A549 (cell line): ENCODE measurements at regions of chr10 and their contacts with region 1.

Region 1: GRCh38 chr10:97553575-97554031 is 19.0 kb upstream of the ANKRD2 start:
- DNase-seq: peak; percentile 74 to 76
- ATAC-seq: peak; percentile 98 to 100
- H3K4me3 ChIP-seq: no peak overlapping the region
- H3K27ac ChIP-seq: peak overlapping the region in 1 of 2 experiments; percentile 66; a peak in 3 of 6 replicates
- H3K4me1 ChIP-seq: peaks cover 8% of the 10 kb centered on the region
- CTCF ChIP-seq: peak; percentile 86
- EP300 ChIP-seq: no peak
- POLR2A ChIP-seq: no peak
- RAD21 ChIP-seq: peak; percentile 89 to 91

Region 2: GRCh38 chr10:97425964-97426775 is 127.4 kb before region 1 on chr10 and contains the start of gene PGAM1:
- CTCF ChIA-PET with region 1: no interaction called
- POLR2A ChIA-PET with region 1: no interaction called
- DNase-seq: peak; percentile 96 to 97
- ATAC-seq: peak; percentile 92 to 94
- H3K4me3 ChIP-seq: peak within 1 kb of the TSS; percentile 73
- H3K27ac ChIP-seq: peak within 1 kb of the TSS; percentile 88 to 91
- H3K4me1 ChIP-seq: peaks cover 17% of the 10 kb centered on the region; the same call in 2 of the 3 replicates
- CTCF ChIP-seq: peak; percentile 62
- EP300 ChIP-seq: no peak
- POLR2A ChIP-seq: peak; percentile 48
- RAD21 ChIP-seq: no peak
- polyA plus RNA-seq, gene PGAM1: 459 and 516 TPM in 2 replicates

Region 3: GRCh38 chr10:97463363-97464132 is 90.1 kb before region 1 on chr10:
- CTCF ChIA-PET with region 1: interaction called, 218 read pairs
- POLR2A ChIA-PET with region 1: interaction called, 3 read pairs
- DNase-seq: peak; percentile 62 to 63
- ATAC-seq: peak; percentile 67 to 75; a peak in 5 of 6 replicates
- H3K4me3 ChIP-seq: no peak overlapping the region
- H3K27ac ChIP-seq: peak overlapping the region in 1 of 2 experiments; percentile 10; a peak in 1 of 6 replicates
- H3K4me1 ChIP-seq: peaks cover 8% of the 10 kb centered on the region
- CTCF ChIP-seq: peak; percentile 95
- EP300 ChIP-seq: no peak
- POLR2A ChIP-seq: no peak
- RAD21 ChIP-seq: peak; percentile 83 to 84

Region 4: GRCh38 chr10:97498076-97498840 is 55.3 kb before region 1 on chr10 and contains the start of gene MMS19:
- CTCF ChIA-PET with region 1: interaction called, 38 read pairs
- POLR2A ChIA-PET with region 1: interaction called, 5 read pairs
- DNase-seq: peak; percentile 97 to 98
- ATAC-seq: peak; percentile 73 to 82
- H3K4me3 ChIP-seq: peak within 1 kb of the TSS; percentile 74
- H3K27ac ChIP-seq: peak within 1 kb of the TSS; percentile 85 to 96
- H3K4me1 ChIP-seq: peaks cover 23% of the 10 kb centered on the region; the same call in 2 of the 3 replicates
- CTCF ChIP-seq: no peak
- EP300 ChIP-seq: no peak
- POLR2A ChIP-seq: peak; percentile 73
- RAD21 ChIP-seq: no peak
- polyA plus RNA-seq, gene MMS19: 65.6 and 83.4 TPM in 2 replicates

Region 5: GRCh38 chr10:97534746-97535367 is 18.7 kb before region 1 on chr10:
- CTCF ChIA-PET with region 1: interaction called, 213 read pairs
- POLR2A ChIA-PET with region 1: interaction called, 3 read pairs
- DNase-seq: peak; percentile 61 to 67
- ATAC-seq: peak; percentile 77 to 87
- H3K4me3 ChIP-seq: no peak overlapping the region
- H3K27ac ChIP-seq: 0 out of 6 replicates have a peak overlapping the region, but pooled peaks of 1 of the 2 experiments have one; percentile 16
- H3K4me1 ChIP-seq: peaks cover 20% of the 10 kb centered on the region
- CTCF ChIP-seq: peak; percentile 59
- EP300 ChIP-seq: no peak
- POLR2A ChIP-seq: no peak
- RAD21 ChIP-seq: peak; percentile 52 to 74

Region 6: GRCh38 chr10:97566339-97566996 is 12.9 kb after region 1 on chr10:
- CTCF ChIA-PET with region 1: interaction called, 131 read pairs
- POLR2A ChIA-PET with region 1: no interaction called
- DNase-seq: no peak
- ATAC-seq: no peak
- H3K4me3 ChIP-seq: no peak overlapping the region
- H3K27ac ChIP-seq: no peak overlapping the region
- H3K4me1 ChIP-seq: peaks cover 7% of the 10 kb centered on the region
- CTCF ChIP-seq: no peak
- EP300 ChIP-seq: no peak
- POLR2A ChIP-seq: no peak
- RAD21 ChIP-seq: no peak

Region 7: DNA sequence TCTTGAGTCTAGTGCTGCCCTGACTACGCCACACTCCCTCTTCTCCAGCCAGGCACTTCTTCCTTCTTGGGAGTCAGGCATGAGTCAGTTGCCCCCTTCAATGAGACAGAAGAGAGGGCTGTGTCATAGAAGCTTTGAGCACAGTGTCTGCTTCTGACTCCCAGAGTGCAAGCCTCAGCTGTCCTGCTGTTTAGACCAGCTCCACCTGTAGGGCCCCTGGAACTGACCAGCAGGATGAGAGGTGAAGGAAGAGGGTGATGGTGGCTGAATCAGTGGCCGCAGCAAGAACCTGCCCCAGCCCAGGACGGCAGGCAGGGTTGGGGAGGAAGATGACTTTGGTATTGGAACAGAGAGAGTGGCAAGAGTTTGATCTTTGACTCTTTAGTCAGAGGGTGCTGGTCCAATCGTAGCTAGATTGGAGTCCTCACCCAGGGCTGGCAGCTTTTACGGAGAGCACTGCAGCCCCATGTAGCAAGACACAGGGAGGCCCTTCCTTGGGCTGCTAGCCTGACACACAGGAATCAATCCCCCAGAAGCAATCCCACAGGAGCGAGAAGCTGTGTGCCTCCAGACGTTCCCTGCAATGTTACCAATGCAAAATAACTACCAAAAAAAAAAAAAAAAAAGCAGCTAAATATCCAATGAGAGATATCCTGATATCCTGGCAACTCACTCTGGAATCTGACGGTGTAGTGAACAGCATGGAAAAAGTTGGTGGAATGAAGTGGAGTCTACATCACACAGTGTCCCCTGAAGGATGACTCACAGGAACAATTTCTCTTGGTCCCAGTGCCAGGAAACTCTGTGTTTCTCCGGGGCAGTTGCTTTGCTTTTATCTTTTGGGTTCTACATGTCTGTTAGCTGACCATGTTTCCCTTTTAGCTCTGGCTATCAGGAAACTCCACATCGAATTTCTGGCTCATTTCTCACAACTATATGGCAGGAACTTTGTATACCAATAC is 42.8 kb after region 1 on chr10:
- CTCF ChIA-PET with region 1: interaction called, 13 read pairs
- POLR2A ChIA-PET with region 1: no interaction called
- DNase-seq: peak; percentile 68 to 73
- ATAC-seq: peak; percentile 90 to 91
- H3K4me3 ChIP-seq: no peak overlapping the region
- H3K27ac ChIP-seq: peak overlapping the region; percentile 76 to 88
- H3K4me1 ChIP-seq: peaks cover 30% of the 10 kb centered on the region
- CTCF ChIP-seq: no peak
- EP300 ChIP-seq: no peak
- POLR2A ChIP-seq: no peak
- RAD21 ChIP-seq: no peak

Region 8: DNA sequence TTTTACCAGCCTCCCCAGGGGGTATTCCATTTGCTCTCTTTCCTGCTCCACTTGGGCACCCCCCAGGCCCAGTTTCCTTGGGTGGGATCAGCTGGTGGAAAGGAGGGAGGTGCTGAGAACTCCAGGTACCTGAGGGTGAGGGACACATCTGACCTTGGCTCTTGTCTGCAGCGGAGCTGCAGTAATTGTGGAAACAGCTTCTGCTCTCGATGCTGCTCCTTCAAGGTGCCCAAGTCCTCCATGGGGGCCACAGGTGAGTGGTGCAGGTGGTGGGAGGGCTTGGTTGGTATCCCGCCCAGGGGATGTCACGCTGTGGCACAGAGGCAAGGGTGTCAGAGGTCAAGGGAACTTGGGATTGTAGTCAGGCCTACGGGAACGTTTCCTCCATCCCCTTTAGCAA is 203.9 kb after region 1 on chr10:
- CTCF ChIA-PET with region 1: no interaction called
- POLR2A ChIA-PET with region 1: no interaction called
- DNase-seq: no peak
- ATAC-seq: no peak
- H3K4me3 ChIP-seq: no peak overlapping the region
- H3K27ac ChIP-seq: no peak overlapping the region
- H3K4me1 ChIP-seq: no peaks in the 10 kb centered on the region
- CTCF ChIP-seq: no peak
- EP300 ChIP-seq: no peak
- POLR2A ChIP-seq: no peak
- RAD21 ChIP-seq: no peak